ENCODE measurements at regions of chr15 and their contacts with region 1.

Region 1: DNA sequence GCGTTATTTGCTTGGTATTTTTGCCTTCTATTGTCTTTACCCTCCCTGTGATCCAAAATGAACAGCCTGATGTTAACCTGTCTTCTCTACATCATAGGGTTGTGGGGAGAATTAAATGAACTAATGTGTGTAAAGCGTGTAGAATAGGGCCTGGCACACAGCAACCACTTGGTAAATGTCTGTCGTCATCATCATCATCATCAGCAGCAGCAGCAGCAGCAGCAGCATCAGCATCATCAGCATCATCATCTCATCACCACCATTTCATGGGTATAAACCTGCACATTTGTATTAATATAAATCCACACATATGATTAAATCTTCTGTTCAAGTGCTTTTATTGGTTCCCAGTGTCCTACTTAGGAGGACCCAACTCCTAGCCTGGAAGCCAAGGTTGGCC is 51.4 kb downstream of the RYR3 start:
- DNase-seq: no peak
- ATAC-seq: no peak
- H3K4me3 ChIP-seq: no peak overlapping the region
- H3K4me3 Mint-ChIP-seq: no peak overlapping the region
- H3K27ac ChIP-seq: no peak overlapping the region
- H3K27ac Mint-ChIP-seq: no peak overlapping the region
- H3K4me1 ChIP-seq: no peaks in the 10 kb centered on the region
- H3K4me1 Mint-ChIP-seq: no peaks in the 10 kb centered on the region
- H3K27me3 ChIP-seq: no peaks in the 10 kb centered on the region
- H3K27me3 Mint-ChIP-seq: peaks cover 8% of the 10 kb centered on the region
- CTCF ChIP-seq: no peak

Region 2: DNA sequence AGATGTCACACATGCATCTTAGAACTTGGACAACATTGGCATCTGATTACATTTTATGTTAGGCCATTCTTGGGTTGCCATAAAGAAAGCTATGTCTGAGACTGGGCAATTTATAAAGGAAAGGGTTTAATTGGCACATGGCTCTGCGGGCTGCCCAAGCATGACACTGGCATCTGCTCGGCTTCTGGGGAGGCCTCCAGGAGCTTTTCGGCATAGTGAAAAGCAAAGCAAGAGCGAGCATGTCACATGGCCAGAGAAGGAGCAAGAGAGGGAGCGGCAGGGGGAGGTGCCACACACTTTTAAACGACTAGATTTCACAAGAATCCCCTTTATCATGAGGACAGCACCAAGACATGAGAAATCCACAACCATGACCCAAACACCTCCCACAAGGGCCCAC is 40.1 kb before region 1 on chr15:
- CTCF ChIA-PET with region 1: no interaction called
- POLR2A ChIA-PET with region 1: no interaction called
- intact Hi-C with region 1: no loop called
- DNase-seq: no peak
- ATAC-seq: no peak
- H3K4me3 ChIP-seq: no peak overlapping the region
- H3K4me3 Mint-ChIP-seq: no peak overlapping the region
- H3K27ac ChIP-seq: no peak overlapping the region
- H3K27ac Mint-ChIP-seq: no peak overlapping the region
- H3K4me1 ChIP-seq: peaks cover 0 to 13% of the 10 kb centered on the region in 2 donors
- H3K4me1 Mint-ChIP-seq: peaks cover 6% of the 10 kb centered on the region
- H3K27me3 ChIP-seq: peaks cover 0 to 6% (median 2%) of the 10 kb centered on the region in 4 experiments
- H3K27me3 Mint-ChIP-seq: peaks cover 29% of the 10 kb centered on the region
- CTCF ChIP-seq: no peak

Region 3: GRCh38 chr15:33341953-33342352 is 20.3 kb before region 1 on chr15:
- CTCF ChIA-PET with region 1: no interaction called
- POLR2A ChIA-PET with region 1: no interaction called
- intact Hi-C with region 1: no loop called
- DNase-seq: no peak
- ATAC-seq: no peak
- H3K4me3 ChIP-seq: no peak overlapping the region
- H3K4me3 Mint-ChIP-seq: no peak overlapping the region
- H3K27ac ChIP-seq: no peak overlapping the region
- H3K27ac Mint-ChIP-seq: no peak overlapping the region
- H3K4me1 ChIP-seq: no peaks in the 10 kb centered on the region
- H3K4me1 Mint-ChIP-seq: no peaks in the 10 kb centered on the region
- H3K27me3 ChIP-seq: no peaks in the 10 kb centered on the region
- H3K27me3 Mint-ChIP-seq: peaks cover 4% of the 10 kb centered on the region
- CTCF ChIP-seq: no peak

Region 4: DNA sequence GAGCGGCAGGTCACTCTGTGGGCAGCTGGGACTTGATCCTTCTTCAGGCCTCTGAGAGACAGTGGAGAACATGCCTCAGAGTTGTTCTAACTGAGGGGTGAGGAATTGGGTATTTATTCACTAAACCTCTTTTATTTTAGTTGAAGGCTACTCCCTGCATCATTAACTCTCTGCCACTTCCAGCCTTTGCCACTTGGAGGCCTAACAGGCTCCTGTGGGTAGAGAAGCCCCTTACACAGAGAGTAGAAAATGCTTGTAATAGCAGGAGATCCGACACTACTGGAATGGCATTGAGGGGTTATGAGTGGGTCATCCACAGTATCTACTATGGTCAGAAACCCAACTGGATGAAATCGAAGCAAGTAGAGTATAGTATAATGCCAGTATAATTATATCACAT is 30.2 kb after region 1 on chr15:
- CTCF ChIA-PET with region 1: no interaction called
- POLR2A ChIA-PET with region 1: no interaction called
- intact Hi-C with region 1: loop called (anchors 2 kb)
- DNase-seq: no peak
- ATAC-seq: no peak
- H3K4me3 ChIP-seq: no peak overlapping the region
- H3K4me3 Mint-ChIP-seq: no peak overlapping the region
- H3K27ac ChIP-seq: no peak overlapping the region
- H3K27ac Mint-ChIP-seq: no peak overlapping the region
- H3K4me1 ChIP-seq: no peaks in the 10 kb centered on the region
- H3K4me1 Mint-ChIP-seq: no peaks in the 10 kb centered on the region
- H3K27me3 ChIP-seq: no peaks in the 10 kb centered on the region
- H3K27me3 Mint-ChIP-seq: peaks cover 3% of the 10 kb centered on the region
- CTCF ChIP-seq: no peak

Measured in B cell (primary cell).